CD4-positive, alpha-beta T cell (primary cell): ENCODE measurements at regions of chr7 and their contacts with region 1.

Region 1: GRCh38 chr7:149261829-149262617 is at the start of gene ZNF783:
- DNase-seq: peak; percentile 75 to 97 (median 83)
- ATAC-seq: peak; percentile 91
- H3K4me3 ChIP-seq: peak within 1 kb of the TSS; percentile 56
- H3K4me3 Mint-ChIP-seq: peak within 1 kb of the TSS; percentile 89
- H3K27ac ChIP-seq: peak within 1 kb of the TSS; percentile 41 to 42
- H3K27ac Mint-ChIP-seq: peak within 1 kb of the TSS; percentile 80
- H3K4me1 ChIP-seq: peaks cover 28% of the 10 kb centered on the region
- H3K4me1 Mint-ChIP-seq: peaks cover 38% of the 10 kb centered on the region
- H3K27me3 ChIP-seq: no peaks in the 10 kb centered on the region
- H3K27me3 Mint-ChIP-seq: no peaks in the 10 kb centered on the region
- CTCF ChIP-seq: peak; percentile 57
- total RNA-seq, gene ZNF783: 27.6 to 29.0 TPM

Region 2: GRCh38 chr7:149195180-149196150 is 66.6 kb before region 1 on chr7 and contains the start of gene ZNF282:
- CTCF ChIA-PET with region 1: interaction called, 7 read pairs
- POLR2A ChIA-PET with region 1: interaction called, 13 read pairs
- intact Hi-C with region 1: no loop called
- DNase-seq: peak; percentile 32 to 83 (median 59)
- ATAC-seq: peak; percentile 79
- H3K4me3 ChIP-seq: peak within 1 kb of the TSS; percentile 90
- H3K4me3 Mint-ChIP-seq: peak within 1 kb of the TSS; percentile 96
- H3K27ac ChIP-seq: peak within 1 kb of the TSS; percentile 16 to 47
- H3K27ac Mint-ChIP-seq: peak within 1 kb of the TSS; percentile 89
- H3K4me1 ChIP-seq: peaks cover 25% of the 10 kb centered on the region
- H3K4me1 Mint-ChIP-seq: peaks cover 36% of the 10 kb centered on the region
- H3K27me3 ChIP-seq: no peaks in the 10 kb centered on the region
- H3K27me3 Mint-ChIP-seq: no peaks in the 10 kb centered on the region
- CTCF ChIP-seq: peak; percentile 54
- total RNA-seq, gene ZNF282: 13.3 to 15.6 TPM

Region 3: DNA sequence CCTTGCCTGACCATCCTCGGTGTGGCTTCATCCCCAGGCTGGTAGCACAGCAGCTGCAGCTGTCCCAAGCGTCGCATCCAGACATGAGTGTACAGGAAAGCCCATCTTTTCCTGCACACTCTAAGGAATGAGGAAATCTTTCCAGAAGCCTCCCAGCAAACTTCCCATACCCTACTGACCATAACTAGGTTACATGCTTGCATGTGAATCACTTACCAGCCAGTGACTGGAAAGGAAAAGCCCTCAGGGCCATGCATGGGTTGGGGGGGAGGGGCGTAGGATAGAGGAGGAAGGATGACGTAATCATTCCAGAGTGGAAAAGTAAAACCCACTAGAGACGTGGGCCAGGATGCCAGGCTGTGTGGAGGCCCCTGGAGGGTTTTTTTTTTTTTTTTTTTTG is 41.5 kb before region 1 on chr7:
- CTCF ChIA-PET with region 1: no interaction called
- POLR2A ChIA-PET with region 1: no interaction called
- intact Hi-C with region 1: no loop called
- DNase-seq: no peak
- ATAC-seq: no peak
- H3K4me3 ChIP-seq: no peak overlapping the region
- H3K4me3 Mint-ChIP-seq: no peak overlapping the region
- H3K27ac ChIP-seq: no peak overlapping the region
- H3K27ac Mint-ChIP-seq: no peak overlapping the region
- H3K4me1 ChIP-seq: no peaks in the 10 kb centered on the region
- H3K4me1 Mint-ChIP-seq: no peaks in the 10 kb centered on the region
- H3K27me3 ChIP-seq: no peaks in the 10 kb centered on the region
- H3K27me3 Mint-ChIP-seq: no peaks in the 10 kb centered on the region
- CTCF ChIP-seq: no peak

Region 4: DNA sequence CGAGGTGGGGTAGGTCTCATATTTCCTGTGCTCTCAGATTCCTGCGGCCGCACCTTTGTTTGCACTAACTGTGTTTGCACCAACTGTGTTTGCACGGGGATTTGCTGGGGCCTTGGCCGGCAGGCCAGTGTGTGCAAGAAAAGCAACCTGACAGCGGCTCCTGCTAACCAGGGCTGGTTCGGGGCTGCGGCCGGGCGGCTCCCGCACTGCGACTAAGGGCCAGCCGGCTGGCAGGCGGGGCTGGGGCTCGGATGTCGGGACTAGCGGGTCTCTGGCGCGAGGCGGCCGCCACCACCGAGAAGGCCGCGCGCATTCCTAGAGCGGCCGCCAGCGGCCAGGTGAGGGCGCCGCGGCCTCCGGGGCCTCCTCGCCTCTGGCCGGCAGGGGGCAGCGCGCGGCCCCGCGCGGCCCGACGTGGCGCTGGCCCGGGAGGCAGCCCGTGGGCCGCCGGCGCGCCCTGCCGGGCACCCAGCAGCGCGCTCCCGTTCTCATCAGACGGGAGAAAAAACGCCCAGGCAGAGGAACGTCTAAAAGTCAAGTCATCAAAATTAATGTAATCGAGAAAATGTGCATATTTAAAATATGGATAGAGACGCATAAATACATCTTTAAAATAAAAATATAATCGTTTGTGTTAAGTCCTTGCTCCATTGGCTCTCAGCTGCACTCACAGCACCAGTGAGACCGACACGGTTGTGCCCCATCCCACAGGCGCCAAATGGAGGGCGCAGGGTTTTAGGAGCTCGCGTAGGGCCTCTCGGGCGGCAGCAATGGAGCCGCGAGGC is 160.3 kb after region 1 on chr7:
- CTCF ChIA-PET with region 1: interaction called, 4 read pairs
- POLR2A ChIA-PET with region 1: interaction called, 10 read pairs
- intact Hi-C with region 1: loop called (anchors 2 to 5 kb)
- DNase-seq: peak; percentile 33 to 93 (median 69)
- ATAC-seq: peak; percentile 92
- H3K4me3 ChIP-seq: peak overlapping the region; percentile 75
- H3K4me3 Mint-ChIP-seq: peak overlapping the region; percentile 70
- H3K27ac ChIP-seq: peak overlapping the region; percentile 16 to 76
- H3K27ac Mint-ChIP-seq: peak overlapping the region; percentile 68
- H3K4me1 ChIP-seq: peaks cover 17% of the 10 kb centered on the region
- H3K4me1 Mint-ChIP-seq: no peaks in the 10 kb centered on the region
- H3K27me3 ChIP-seq: no peaks in the 10 kb centered on the region
- H3K27me3 Mint-ChIP-seq: no peaks in the 10 kb centered on the region
- CTCF ChIP-seq: peak; percentile 29

Region 5: DNA sequence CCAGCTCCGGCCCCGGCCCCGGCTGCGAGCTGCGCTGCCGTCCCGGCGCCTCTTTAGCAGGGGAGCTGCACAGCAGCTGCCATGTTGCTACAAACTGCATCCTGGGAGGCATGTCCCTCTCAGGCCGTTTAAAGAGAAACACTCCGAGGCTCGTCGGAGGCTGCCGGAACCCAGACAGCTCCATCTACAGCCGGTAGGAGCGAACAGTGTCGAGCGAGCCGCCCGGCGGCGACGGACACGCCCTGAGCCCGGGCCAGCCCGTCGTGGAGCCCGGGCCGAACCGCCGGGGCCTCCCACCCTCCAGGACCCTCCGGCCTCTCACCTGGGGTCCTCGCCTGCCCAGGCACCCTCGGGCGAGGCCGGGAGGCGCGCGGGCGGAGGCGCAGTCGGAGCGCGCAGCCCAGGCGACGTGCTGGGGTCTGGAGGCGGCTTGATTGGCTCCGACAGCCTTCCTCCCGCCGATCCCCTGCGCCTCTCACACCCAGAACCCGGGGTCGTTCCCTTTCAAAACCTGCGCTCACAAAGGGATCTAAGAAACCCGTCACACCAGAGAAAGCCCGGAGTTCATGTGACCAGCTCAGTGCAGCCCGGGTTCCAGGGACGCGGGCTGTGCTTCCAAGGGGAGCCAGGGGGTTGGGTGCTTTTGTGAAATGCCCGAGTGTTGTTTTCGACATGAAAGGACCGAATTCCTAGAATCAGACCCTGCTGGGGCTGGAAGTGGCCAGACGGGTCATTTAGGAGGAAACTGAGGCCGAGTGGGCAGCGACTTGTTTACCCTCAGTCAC is 198.7 kb after region 1 on chr7 and contains the start of gene ZNF777:
- CTCF ChIA-PET with region 1: interaction called, 10 read pairs
- POLR2A ChIA-PET with region 1: interaction called, 9 read pairs
- intact Hi-C with region 1: loop called in 1 of 2 experiments (anchors 2 kb)
- DNase-seq: peak; percentile 70 to 92 (median 78)
- ATAC-seq: peak; percentile 99
- H3K4me3 ChIP-seq: peak within 1 kb of the TSS; percentile 74
- H3K4me3 Mint-ChIP-seq: peak within 1 kb of the TSS; percentile 92
- H3K27ac ChIP-seq: peak within 1 kb of the TSS in 1 of 2 donors; percentile 52
- H3K27ac Mint-ChIP-seq: peak within 1 kb of the TSS; percentile 70
- H3K4me1 ChIP-seq: peaks cover 25% of the 10 kb centered on the region
- H3K4me1 Mint-ChIP-seq: peaks cover 33% of the 10 kb centered on the region
- H3K27me3 ChIP-seq: peaks cover 0 to 5% of the 10 kb centered on the region in 2 experiments
- H3K27me3 Mint-ChIP-seq: peaks cover 15% of the 10 kb centered on the region
- CTCF ChIP-seq: peak; percentile 49
- total RNA-seq, gene ZNF777: 14.5 to 14.8 TPM

Region 6: DNA sequence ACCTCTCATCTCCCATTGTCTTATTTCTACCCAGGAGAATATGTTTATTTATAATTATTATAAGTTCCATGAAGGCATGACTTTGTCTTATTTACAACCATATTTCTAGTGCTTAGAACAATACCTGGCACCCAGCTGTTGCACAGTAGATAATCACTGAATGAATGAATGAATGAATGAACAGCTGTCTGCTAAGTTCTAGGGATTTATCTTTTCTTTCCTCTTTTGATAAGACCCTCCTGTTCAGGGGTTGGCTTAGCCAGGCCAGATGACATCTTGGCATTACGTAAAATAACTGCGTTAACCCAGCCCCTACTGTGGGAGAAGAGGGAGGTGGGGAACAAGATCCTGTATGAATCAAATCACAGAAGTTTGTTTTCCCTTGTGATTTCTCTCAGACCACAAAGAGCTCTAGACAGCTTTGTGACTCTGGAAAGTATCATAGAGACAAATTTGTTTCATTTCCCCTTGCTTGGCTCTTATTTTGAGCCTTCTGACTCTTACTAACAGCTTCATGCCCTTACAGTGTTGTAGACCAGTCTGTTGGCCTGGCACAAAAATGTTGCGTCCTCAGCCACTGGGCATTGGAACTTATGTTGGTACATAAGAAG is 584.5 kb after region 1 on chr7:
- CTCF ChIA-PET with region 1: no interaction called
- POLR2A ChIA-PET with region 1: no interaction called
- intact Hi-C with region 1: loop called in 1 of 2 experiments (anchors 10 kb)
- DNase-seq: no peak
- ATAC-seq: no peak
- H3K4me3 ChIP-seq: no peak overlapping the region
- H3K4me3 Mint-ChIP-seq: no peak overlapping the region
- H3K27ac ChIP-seq: no peak overlapping the region
- H3K27ac Mint-ChIP-seq: no peak overlapping the region
- H3K4me1 ChIP-seq: peaks cover 10% of the 10 kb centered on the region
- H3K4me1 Mint-ChIP-seq: peaks cover 54% of the 10 kb centered on the region
- H3K27me3 ChIP-seq: no peaks in the 10 kb centered on the region
- H3K27me3 Mint-ChIP-seq: no peaks in the 10 kb centered on the region
- CTCF ChIP-seq: no peak